CD4-positive, alpha-beta T cell (primary cell): ENCODE measurements at regions of chr17 and their contacts with region 1.

Region 1: GRCh38 chr17:78798695-78799559 is 16.9 kb upstream of the CYTH1 start:
- DNase-seq: peak in 5 of 14 experiments; percentile 29 to 72 (median 68)
- ATAC-seq: peak; percentile 29
- H3K4me3 ChIP-seq: no peak overlapping the region
- H3K4me3 Mint-ChIP-seq: peak overlapping the region; percentile 71
- H3K27ac ChIP-seq: no peak overlapping the region
- H3K27ac Mint-ChIP-seq: peak overlapping the region; percentile 97
- H3K4me1 ChIP-seq: peaks cover 60% of the 10 kb centered on the region
- H3K4me1 Mint-ChIP-seq: peaks cover 80% of the 10 kb centered on the region
- H3K27me3 ChIP-seq: no peaks in the 10 kb centered on the region
- H3K27me3 Mint-ChIP-seq: no peaks in the 10 kb centered on the region
- CTCF ChIP-seq: peak; percentile 71

Region 2: DNA sequence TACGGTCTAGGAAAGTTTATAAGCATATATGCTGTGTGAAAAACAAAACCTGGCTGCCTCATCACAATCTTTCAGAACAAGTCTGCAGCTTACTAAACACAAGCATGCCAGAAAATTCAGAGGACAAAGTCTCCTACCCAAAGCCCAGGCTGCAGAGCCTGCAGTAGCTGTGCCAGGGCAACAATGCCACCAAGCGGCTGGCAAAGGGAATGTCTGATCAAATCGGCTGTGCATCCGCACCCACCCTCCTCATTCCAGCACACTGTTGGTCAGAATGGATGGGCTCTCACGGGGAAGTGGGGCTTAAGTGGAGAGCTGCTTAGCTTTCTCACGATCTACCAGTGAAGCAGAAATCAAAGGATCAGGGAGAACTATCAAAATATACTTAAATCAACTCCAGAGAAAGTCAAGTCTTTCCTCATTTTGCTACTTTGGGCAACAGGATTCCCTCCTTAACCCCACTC is 90.4 kb before region 1 on chr17:
- CTCF ChIA-PET with region 1: interaction called, 10 read pairs
- POLR2A ChIA-PET with region 1: no interaction called
- intact Hi-C with region 1: loop called in 1 of 2 experiments (anchors 2 kb)
- DNase-seq: peak; percentile 42 to 81 (median 54)
- ATAC-seq: peak; percentile 81
- H3K4me3 ChIP-seq: no peak overlapping the region
- H3K4me3 Mint-ChIP-seq: peak overlapping the region; percentile 79
- H3K27ac ChIP-seq: peak overlapping the region; percentile 11 to 39
- H3K27ac Mint-ChIP-seq: peak overlapping the region; percentile 78
- H3K4me1 ChIP-seq: peaks cover 51% of the 10 kb centered on the region
- H3K4me1 Mint-ChIP-seq: peaks cover 67% of the 10 kb centered on the region
- H3K27me3 ChIP-seq: no peaks in the 10 kb centered on the region
- H3K27me3 Mint-ChIP-seq: no peaks in the 10 kb centered on the region
- CTCF ChIP-seq: peak; percentile 87